WTC11 (cell line): ENCODE measurements at regions of chr2 and their contacts with region 1.

Region 1: GRCh38 chr2:219560037-219560892 is 11.1 kb downstream of the OBSL1 start:
- DNase-seq: no peak
- ATAC-seq: peak; percentile 4
- H3K4me3 Mint-ChIP-seq: no peak overlapping the region
- H3K27ac Mint-ChIP-seq: peak overlapping the region; percentile 84
- H3K4me1 Mint-ChIP-seq: peaks cover 56% of the 10 kb centered on the region
- H3K27me3 Mint-ChIP-seq: peaks cover 4% of the 10 kb centered on the region; the same call in 1 of the 2 replicates
- CTCF ChIP-seq: peak; percentile 91

Region 2: GRCh38 chr2:219521066-219521880 is 39.0 kb before region 1 on chr2:
- CTCF ChIA-PET with region 1: interaction called, 12 read pairs
- POLR2A ChIA-PET with region 1: no interaction called
- DNase-seq: peak; percentile 80
- ATAC-seq: peak; percentile 68
- H3K4me3 Mint-ChIP-seq: peak overlapping the region; percentile 64
- H3K27ac Mint-ChIP-seq: peak overlapping the region; percentile 58
- H3K4me1 Mint-ChIP-seq: peaks cover 64% of the 10 kb centered on the region
- H3K27me3 Mint-ChIP-seq: peaks cover 32% of the 10 kb centered on the region
- CTCF ChIP-seq: peak; percentile 49; the same call in 1 of the 2 replicates

Region 3: DNA sequence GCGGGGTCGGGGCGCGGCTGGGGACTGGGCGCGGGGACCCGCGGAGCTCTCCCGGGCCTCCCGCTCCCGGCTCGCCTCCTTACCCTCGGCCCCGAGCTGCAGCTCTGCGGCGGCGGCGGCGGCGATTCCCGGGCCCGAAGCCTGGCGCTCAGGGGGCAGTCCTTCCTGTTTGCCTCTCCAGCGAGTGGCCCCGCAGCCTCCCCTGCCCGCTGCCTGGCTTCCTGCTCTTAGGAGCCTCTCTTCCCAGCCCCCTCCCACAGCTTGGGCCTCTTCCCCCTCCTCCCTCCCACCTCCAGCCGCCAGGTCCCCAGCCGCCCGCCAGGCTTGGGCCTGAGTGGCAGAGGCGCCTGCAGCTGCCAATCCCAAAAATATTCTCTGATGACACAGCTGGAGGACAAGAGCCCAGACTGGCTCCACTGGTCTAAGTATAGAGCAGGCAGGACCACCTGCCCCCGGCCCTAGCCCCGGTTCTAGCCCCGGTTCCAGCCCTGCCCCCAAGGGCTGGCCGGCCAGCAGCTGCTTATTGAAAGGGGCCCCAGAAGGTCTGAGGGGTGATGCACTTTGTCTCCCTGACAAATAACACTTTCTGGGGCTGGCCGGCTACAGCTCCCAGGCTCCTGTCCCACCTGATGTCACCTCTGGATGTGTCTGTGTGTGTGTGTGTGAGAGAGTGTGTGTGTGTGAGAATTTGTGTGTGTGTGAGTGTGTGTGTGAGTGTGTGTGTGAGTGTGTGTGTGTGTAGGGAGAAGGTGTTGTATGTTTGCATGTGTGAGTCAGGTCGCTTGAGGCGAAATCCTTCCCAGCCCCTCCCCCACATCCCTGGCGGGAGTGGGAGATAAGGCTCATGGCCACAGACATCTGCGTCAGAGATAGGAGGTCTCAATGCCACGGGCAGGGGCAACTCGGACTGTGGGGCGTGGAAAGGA is 11.3 kb after region 1 on chr2 and contains the start of gene OBSL1:
- CTCF ChIA-PET with region 1: interaction called, 66 read pairs
- POLR2A ChIA-PET with region 1: interaction called, 29 read pairs
- DNase-seq: peak; percentile 88
- ATAC-seq: peak; percentile 79
- H3K4me3 Mint-ChIP-seq: peak within 1 kb of the TSS; percentile 49
- H3K27ac Mint-ChIP-seq: peak within 1 kb of the TSS; percentile 90
- H3K4me1 Mint-ChIP-seq: peaks cover 64% of the 10 kb centered on the region
- H3K27me3 Mint-ChIP-seq: peaks cover 27% of the 10 kb centered on the region
- CTCF ChIP-seq: no peak
- total RNA-seq, gene OBSL1: 159 to 221 TPM (median 213 TPM) in 3 replicates

Region 4: GRCh38 chr2:219597552-219598307 is 37.5 kb after region 1 on chr2 and contains the start of gene STK11IP:
- CTCF ChIA-PET with region 1: interaction called, 53 read pairs
- POLR2A ChIA-PET with region 1: interaction called, 17 read pairs
- DNase-seq: peak; percentile 94
- ATAC-seq: peak; percentile 89
- H3K4me3 Mint-ChIP-seq: peak within 1 kb of the TSS; percentile 97
- H3K27ac Mint-ChIP-seq: peak within 1 kb of the TSS; percentile 99
- H3K4me1 Mint-ChIP-seq: peaks cover 33% of the 10 kb centered on the region
- H3K27me3 Mint-ChIP-seq: no peaks in the 10 kb centered on the region
- CTCF ChIP-seq: no peak
- total RNA-seq, gene STK11IP: 31.3 to 39.9 TPM (median 31.9 TPM) in 3 replicates

Region 5: DNA sequence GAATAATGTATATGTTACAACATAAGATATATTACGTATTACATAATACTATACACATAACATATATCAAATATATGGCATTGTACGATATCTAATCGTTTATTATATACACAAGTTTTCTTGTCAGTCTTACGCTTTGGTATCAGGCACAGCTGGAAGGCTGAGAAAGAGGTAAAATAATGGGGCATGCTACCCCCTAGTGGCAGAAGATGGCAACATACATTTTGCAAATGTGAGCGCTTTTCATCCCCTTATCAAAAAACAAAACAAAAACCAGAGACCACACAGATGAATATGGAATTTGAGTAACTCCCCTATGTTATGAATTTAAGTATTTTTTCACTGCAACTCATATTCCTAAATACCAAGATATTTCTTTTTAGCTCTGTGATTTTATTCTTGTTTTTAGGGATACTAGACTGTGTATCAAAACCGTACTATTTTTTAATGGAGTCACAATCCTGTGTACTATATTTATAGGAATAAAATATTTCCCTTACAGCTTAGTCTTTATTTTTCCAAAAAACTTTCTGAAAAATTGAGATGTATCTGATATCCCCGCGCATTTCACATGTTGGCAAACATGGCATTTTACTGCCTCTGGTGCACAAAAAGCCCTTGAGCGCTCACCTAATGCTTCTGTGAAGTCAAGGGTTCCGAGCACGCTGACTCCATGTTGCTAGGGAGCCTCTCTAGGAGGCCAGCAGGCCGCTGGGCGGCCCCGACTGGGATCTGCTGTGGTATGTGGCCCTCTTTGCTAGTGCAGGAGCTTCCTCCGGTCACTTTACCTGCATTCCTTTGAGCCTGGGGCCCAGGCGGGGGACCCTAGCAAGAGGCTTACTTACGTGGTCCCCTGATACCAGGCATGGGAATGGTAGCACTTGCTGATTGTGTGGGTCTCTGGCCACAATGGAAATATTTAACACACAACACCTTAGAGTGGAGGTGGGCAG is 129.7 kb after region 1 on chr2:
- CTCF ChIA-PET with region 1: interaction called, 16 read pairs
- POLR2A ChIA-PET with region 1: interaction called, 3 read pairs
- DNase-seq: peak; percentile 55
- ATAC-seq: peak; percentile 34
- H3K4me3 Mint-ChIP-seq: no peak overlapping the region
- H3K27ac Mint-ChIP-seq: no peak overlapping the region; the same call in 1 of the 2 replicates
- H3K4me1 Mint-ChIP-seq: peaks cover 51% of the 10 kb centered on the region
- H3K27me3 Mint-ChIP-seq: no peaks in the 10 kb centered on the region; the same call in 1 of the 2 replicates
- CTCF ChIP-seq: peak; percentile 70

Region 6: GRCh38 chr2:219944866-219945265 is 384.6 kb after region 1 on chr2:
- CTCF ChIA-PET with region 1: no interaction called
- POLR2A ChIA-PET with region 1: no interaction called
- DNase-seq: no peak
- ATAC-seq: no peak
- H3K4me3 Mint-ChIP-seq: no peak overlapping the region
- H3K27ac Mint-ChIP-seq: no peak overlapping the region
- H3K4me1 Mint-ChIP-seq: peaks cover 12% of the 10 kb centered on the region
- H3K27me3 Mint-ChIP-seq: no peaks in the 10 kb centered on the region; the same call in 1 of the 2 replicates
- CTCF ChIP-seq: no peak